ENCODE measurements at regions of chr16 and their contacts with region 1.

Region 1: GRCh38 chr16:50210266-50211038 is 55.9 kb upstream of the ADCY7 start:
- DNase-seq: peak; percentile 51 to 82 (median 66)
- ATAC-seq: peak; percentile 100
- H3K4me3 ChIP-seq: no peak overlapping the region
- H3K27ac ChIP-seq: no peak overlapping the region
- H3K4me1 ChIP-seq: no peaks in the 10 kb centered on the region; a peak in 1 of 5 replicates
- H3K27me3 ChIP-seq: no peaks in the 10 kb centered on the region
- CTCF ChIP-seq: peak; percentile 84 to 97 (median 93)
- EP300 ChIP-seq: no peak
- POLR2A ChIP-seq: no peak
- RAD21 ChIP-seq: peak; percentile 82 to 92

Region 2: DNA sequence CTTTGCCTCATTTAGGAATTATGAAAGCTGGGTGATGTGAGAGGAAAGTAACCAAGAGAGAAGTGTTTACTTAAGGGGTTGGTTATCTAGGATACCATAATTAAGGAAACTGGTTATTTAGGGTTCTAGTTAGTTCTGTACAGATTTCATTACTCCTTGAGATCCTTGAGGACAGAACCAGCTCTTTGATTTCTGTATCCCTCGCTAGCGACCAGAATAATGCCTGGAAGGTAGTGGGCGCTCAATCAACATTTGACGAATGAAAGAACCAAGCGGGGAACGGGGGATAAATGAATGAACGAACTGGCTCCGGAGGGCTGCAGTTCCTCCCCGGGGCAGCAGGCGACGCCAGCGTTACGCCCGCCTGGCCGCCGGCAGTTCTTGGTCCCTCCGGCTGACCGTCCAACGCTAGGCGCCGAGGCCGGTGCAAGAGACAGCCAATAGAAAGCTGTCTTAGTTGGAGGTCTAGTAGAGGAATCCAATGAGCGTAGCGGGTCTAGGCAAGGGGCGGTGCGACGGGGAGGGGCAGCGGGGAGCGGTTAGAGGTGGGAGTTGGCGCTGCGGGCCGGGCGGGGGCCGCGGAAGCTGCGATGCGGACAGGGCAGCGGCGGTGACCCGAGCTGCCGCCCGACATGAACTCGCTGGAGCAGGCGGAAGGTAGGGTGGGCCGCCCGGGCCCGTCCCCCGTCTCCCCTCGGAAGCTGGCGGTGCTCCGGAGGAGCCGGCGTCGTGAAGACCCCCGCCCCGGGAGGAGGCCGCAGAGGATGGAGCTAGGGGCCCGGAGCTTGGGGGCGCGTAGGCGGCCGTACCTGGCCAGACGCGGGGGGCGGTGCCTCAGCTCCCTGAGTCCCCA is 185.5 kb before region 1 on chr16 and contains the start of gene CNEP1R1:
- CTCF ChIA-PET with region 1: interaction called, 44 read pairs
- POLR2A ChIA-PET with region 1: interaction called, 9 read pairs
- in situ Hi-C with region 1: loop called (anchors 5 kb)
- intact Hi-C with region 1: loop called (anchors 1 kb)
- DNase-seq: peak; percentile 97 to 99 (median 99)
- ATAC-seq: peak; percentile 98
- H3K4me3 ChIP-seq: peak within 1 kb of the TSS; percentile 92
- H3K27ac ChIP-seq: peak within 1 kb of the TSS; percentile 70
- H3K4me1 ChIP-seq: peaks cover 0 to 9% of the 10 kb centered on the region in 2 experiments; a peak in 3 of 5 replicates
- H3K27me3 ChIP-seq: no peaks in the 10 kb centered on the region
- CTCF ChIP-seq: peak; percentile 97 to 100 (median 99)
- EP300 ChIP-seq: peak; percentile 55
- POLR2A ChIP-seq: peak; percentile 69
- RAD21 ChIP-seq: peak; percentile 97 to 98
- polyA plus RNA-seq, gene CNEP1R1: 9.7 to 10.8 TPM

Region 3: DNA sequence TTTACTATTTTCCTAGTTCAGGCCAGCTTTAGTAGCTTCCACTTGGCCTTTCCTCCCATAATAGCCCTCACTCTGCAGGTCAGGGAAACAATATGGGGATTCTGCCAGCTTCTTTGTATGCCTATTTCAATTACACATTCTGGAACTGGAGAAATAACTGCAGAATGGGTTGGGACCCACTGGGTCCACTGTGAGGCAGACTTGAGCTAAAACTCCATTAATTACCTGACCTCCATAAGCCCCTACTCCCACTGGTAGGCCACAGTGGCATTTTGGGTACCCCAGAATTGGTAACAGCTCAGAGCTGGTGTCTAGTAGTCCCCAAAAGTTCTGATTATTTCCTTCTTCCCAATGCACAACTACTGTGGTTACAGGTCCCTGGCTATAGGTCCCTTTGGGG is 74.1 kb before region 1 on chr16:
- CTCF ChIA-PET with region 1: no interaction called
- POLR2A ChIA-PET with region 1: interaction called, 3 read pairs
- in situ Hi-C with region 1: no loop called
- intact Hi-C with region 1: loop called (anchors 5 kb)
- DNase-seq: no peak
- ATAC-seq: peak; percentile 51; the same call in 1 of the 3 replicates
- H3K4me3 ChIP-seq: no peak overlapping the region
- H3K27ac ChIP-seq: no peak overlapping the region
- H3K4me1 ChIP-seq: no peaks in the 10 kb centered on the region
- H3K27me3 ChIP-seq: peaks cover 12 to 15% of the 10 kb centered on the region in 2 experiments
- CTCF ChIP-seq: peak; percentile 31 to 38 (median 33); a peak in 5 of 6 replicates
- EP300 ChIP-seq: no peak
- POLR2A ChIP-seq: no peak
- RAD21 ChIP-seq: peak in 1 of 2 experiments; percentile 52; a peak in 2 of 4 replicates

Region 4: GRCh38 chr16:50509521-50510341 is 299.3 kb after region 1 on chr16:
- CTCF ChIA-PET with region 1: interaction called, 11 read pairs
- POLR2A ChIA-PET with region 1: no interaction called
- in situ Hi-C with region 1: loop called (anchors 25 kb)
- intact Hi-C with region 1: loop called (anchors 1 kb)
- DNase-seq: peak; percentile 51 to 56 (median 52)
- ATAC-seq: peak; percentile 75
- H3K4me3 ChIP-seq: no peak overlapping the region
- H3K27ac ChIP-seq: no peak overlapping the region
- H3K4me1 ChIP-seq: no peaks in the 10 kb centered on the region
- H3K27me3 ChIP-seq: peaks cover 12 to 19% of the 10 kb centered on the region in 2 experiments; a peak in 2 of 5 replicates
- CTCF ChIP-seq: peak; percentile 64 to 90 (median 79)
- EP300 ChIP-seq: no peak
- POLR2A ChIP-seq: no peak
- RAD21 ChIP-seq: peak; percentile 71 to 87

Region 5: DNA sequence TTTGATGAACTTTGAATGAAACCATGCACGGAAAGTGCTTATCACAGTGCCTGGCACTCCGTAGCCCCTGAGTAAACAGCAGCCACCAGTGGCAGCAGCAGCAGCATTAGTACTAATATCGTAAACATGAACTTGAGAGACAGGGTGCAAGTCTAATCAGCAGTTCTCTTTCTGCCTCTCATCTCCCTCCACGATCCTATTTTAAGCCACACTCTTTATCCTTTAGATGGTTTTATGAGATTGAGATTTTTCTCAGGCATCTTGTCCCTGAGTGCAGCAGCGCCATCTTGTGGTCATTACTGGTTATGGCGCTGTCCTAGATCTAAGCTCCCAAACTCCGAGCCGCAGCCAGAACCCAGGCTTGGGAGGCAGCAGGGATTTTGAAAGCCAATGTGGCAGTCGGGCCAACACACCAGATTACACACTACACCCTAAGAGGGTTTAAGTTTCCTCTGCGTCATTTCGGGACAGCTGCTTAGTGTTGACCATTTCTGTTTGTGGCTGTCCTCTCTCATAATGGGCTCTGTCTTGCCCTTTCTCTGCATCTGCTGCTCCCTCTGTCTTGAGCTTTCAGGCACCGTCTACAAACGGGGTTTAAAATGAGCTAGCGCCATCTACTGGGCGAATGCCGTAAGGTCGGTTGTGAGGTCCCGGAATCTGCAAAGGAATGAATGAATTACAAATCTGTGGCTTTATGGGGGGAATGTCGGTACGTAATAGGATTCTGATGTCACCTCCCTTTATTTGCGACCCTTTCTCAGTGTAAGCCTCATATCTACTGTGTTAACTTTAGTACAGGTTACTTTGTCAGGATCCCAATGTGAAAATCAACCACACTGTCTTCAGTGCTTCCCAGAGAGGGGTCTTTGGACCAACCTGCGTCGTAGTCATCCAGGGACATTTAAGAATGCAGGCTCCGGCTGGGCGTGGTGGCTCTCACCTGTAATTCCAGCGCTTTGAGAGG is 595.9 kb after region 1 on chr16:
- CTCF ChIA-PET with region 1: interaction called, 7 read pairs
- POLR2A ChIA-PET with region 1: no interaction called
- in situ Hi-C with region 1: no loop called
- intact Hi-C with region 1: loop called (anchors 5 kb)
- DNase-seq: peak; percentile 75 to 81 (median 78)
- ATAC-seq: peak; percentile 95
- H3K4me3 ChIP-seq: no peak overlapping the region
- H3K27ac ChIP-seq: no peak overlapping the region
- H3K4me1 ChIP-seq: no peaks in the 10 kb centered on the region
- H3K27me3 ChIP-seq: peaks cover 2 to 18% of the 10 kb centered on the region in 2 experiments; a peak in 2 of 5 replicates
- CTCF ChIP-seq: peak; percentile 83 to 92 (median 90)
- EP300 ChIP-seq: no peak
- POLR2A ChIP-seq: no peak
- RAD21 ChIP-seq: peak; percentile 72 to 85

Measured in K562 (cell line).